Heart right ventricle (tissue), 16 donors: ENCODE measurements at regions of chr17 and their contacts with region 1.

Region 1: GRCh38 chr17:17919169-17920107 is 52.8 kb downstream of the TOM1L2 start:
- DNase-seq: peak; percentile 60 to 82
- ATAC-seq: peak; percentile 50 to 78 (median 67)
- H3K4me3 ChIP-seq: no peak overlapping the region
- H3K27ac ChIP-seq: peak overlapping the region in 5 of 10 donors; percentile 6 to 87 (median 78)
- H3K4me1 ChIP-seq: peaks cover 22 to 62% (median 47%) of the 10 kb centered on the region in 9 donors
- H3K27me3 ChIP-seq: no peaks in the 10 kb centered on the region
- CTCF ChIP-seq: peak; percentile 58 to 85 (median 79)

Region 2: GRCh38 chr17:17823433-17824118 is 95.9 kb before region 1 on chr17:
- intact Hi-C with region 1: no loop called
- DNase-seq: peak; percentile 83 to 88
- ATAC-seq: peak; percentile 86 to 94 (median 90)
- H3K4me3 ChIP-seq: peak overlapping the region; percentile 1 to 67 (median 54)
- H3K27ac ChIP-seq: peak overlapping the region; percentile 57 to 92 (median 83)
- H3K4me1 ChIP-seq: peaks cover 29 to 78% (median 69%) of the 10 kb centered on the region in 9 donors
- H3K27me3 ChIP-seq: no peaks in the 10 kb centered on the region
- CTCF ChIP-seq: no peak

Region 3: GRCh38 chr17:17859909-17860765 is 59.3 kb before region 1 on chr17:
- intact Hi-C with region 1: loop called in 3 of 10 experiments (anchors 10 kb)
- DNase-seq: peak; percentile 69 to 75
- ATAC-seq: peak; percentile 88 to 97 (median 94)
- H3K4me3 ChIP-seq: no peak overlapping the region
- H3K27ac ChIP-seq: peak overlapping the region in 7 of 10 donors; percentile 7 to 64 (median 39)
- H3K4me1 ChIP-seq: peaks cover 9 to 42% (median 15%) of the 10 kb centered on the region in 9 donors
- H3K27me3 ChIP-seq: no peaks in the 10 kb centered on the region
- CTCF ChIP-seq: peak; percentile 89 to 99 (median 97)

Region 4: DNA sequence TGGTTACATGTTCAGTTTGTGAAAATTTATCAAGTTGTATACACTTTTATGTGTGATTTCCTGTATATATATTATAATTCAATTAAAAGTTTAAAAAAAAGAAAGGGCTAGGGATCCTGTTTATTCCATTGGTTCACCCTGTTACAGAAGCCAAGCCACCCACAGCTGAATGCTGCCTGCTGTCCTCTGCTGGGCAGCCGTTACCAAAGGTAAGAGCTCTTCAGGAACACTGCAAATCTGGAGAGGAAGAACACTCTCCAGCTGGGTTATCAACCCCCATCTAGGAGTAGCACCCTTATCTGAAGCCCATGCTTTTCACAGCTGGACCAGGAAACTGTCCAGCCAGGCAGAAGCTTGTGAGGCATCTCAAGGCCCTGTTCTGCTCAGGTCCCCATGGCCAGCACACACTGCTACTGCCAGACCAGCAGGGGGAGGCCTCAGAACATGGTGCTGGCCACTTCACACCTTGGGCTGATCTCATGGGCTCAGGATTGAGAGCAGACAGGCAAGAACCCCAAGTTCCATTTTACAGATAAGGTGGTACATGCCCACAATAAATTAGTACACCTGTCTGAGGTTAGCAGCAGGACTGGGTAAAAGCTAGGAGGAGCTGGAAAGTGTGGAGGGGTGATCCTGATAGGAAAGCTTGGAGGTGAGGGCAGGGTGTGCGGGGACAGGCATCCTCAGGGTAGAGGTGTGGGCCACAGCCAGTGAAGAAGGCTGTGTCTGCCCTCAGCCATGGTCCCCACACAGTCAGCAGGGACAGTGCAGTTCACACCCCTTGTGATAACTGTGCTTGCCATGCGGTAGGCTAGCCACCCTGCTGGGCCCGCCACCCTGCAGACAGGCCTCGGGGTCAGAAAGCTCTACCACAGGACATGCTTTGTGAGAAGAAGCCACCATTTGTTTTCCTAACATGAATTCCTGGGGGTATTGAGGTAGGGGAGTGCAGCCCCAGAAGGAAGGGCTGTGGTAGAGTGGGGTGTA is 28.4 kb before region 1 on chr17:
- intact Hi-C with region 1: loop called in 1 of 10 experiments (anchors 5 kb)
- DNase-seq: peak; percentile 38 to 42
- ATAC-seq: peak; percentile 49 to 76 (median 66)
- H3K4me3 ChIP-seq: no peak overlapping the region
- H3K27ac ChIP-seq: peak overlapping the region in 1 of 10 donors; percentile 12
- H3K4me1 ChIP-seq: peaks cover 4 to 43% (median 27%) of the 10 kb centered on the region in 9 donors
- H3K27me3 ChIP-seq: no peaks in the 10 kb centered on the region
- CTCF ChIP-seq: peak; percentile 36 to 75 (median 66)

Region 5: DNA sequence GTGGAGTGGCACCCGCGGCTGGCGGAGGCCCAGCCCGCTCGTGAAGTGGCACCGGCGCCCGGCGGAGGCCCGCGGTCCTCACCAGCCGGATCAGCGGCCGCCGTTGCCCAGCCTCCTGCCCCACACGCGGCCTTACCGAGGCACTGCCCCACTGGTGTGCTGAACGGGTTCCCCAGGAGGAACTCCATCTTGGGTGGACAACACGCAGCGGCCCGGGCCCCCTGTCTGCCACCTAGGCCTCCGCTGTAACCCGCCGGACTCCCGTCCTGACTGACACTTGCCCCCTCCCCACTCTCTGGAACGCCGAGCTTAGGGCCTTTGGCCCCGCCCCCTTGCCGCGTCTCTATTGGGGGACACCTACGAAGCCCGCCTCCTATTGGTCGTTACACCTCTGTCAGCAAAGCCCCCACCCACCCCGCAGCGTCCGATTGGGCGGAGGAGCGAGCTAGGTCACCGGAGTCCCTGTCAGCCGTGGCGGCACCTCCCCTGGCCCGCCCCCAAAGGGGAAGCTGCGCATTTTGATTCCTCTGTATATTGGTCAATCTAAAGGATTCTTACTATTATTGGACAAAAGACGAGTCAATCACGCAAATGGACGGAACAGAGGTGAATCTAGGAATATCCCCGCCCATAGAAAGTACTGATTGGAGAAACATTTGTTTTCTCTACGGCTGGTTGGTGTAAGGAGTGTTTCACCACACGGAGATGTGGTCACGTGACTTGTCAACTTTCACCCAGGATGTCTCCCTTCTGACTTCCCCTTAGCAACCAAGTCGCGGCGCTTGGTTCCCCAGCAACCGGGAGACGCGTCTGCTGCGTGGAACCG is 52.9 kb after region 1 on chr17 and contains the starts of genes DRC3 and TOM1L2:
- intact Hi-C with region 1: loop called in 4 of 10 experiments (anchors 1 to 5 kb)
- DNase-seq: peak; percentile 100
- ATAC-seq: peak; percentile 96 to 98 (median 98)
- H3K4me3 ChIP-seq: peak within 1 kb of the TSS; percentile 73 to 97 (median 94)
- H3K27ac ChIP-seq: peak within 1 kb of the TSS; percentile 79 to 96 (median 94)
- H3K4me1 ChIP-seq: peaks cover under 1 to 54% (median 29%) of the 10 kb centered on the region in 9 donors
- H3K27me3 ChIP-seq: no peaks in the 10 kb centered on the region
- CTCF ChIP-seq: peak in 7 of 9 donors; percentile 15 to 51 (median 37)
- total RNA-seq, gene DRC3: 1.1 to 2.6 (median 2.0) TPM
- total RNA-seq, gene TOM1L2: 174 to 331 (median 290) TPM

Region 6: DNA sequence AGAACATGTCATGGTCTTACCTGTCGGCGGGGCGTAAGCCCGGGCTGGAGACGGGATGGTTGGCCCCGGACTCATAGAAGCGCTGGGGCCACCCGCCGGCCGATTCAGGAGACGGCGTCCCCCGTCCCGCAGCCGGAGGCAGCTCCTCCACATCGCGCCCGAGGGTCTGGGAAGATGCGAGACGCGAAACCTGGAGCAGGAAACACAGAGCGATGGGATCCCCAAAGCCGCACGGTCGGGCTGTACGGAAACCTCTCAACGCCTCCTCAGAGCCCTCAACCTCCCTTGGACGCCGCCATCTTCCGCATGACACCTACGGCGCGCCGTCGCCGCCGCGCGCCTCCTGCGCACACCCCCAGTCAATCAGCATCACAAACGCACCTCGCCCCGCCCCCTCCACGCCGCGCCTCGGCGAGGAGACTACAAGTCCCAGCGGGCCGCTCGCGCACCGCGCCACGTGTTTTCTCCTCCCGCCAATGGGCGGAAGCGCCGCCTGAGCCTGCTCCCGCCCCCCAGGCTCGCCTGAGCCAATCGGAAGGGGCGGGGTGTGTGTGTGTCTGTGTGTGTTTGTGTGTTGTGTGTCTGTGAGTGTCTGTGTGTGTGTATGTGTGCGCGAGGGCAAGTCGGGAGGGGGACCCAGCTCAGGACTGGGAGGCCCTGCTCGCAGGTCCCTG is 119.6 kb after region 1 on chr17 and contains the starts of genes ATPAF2 and GID4:
- intact Hi-C with region 1: loop called in 2 of 10 experiments (anchors 5 kb)
- DNase-seq: peak; percentile 99 to 100
- ATAC-seq: peak; percentile 96 to 99 (median 98)
- H3K4me3 ChIP-seq: peak within 1 kb of the TSS; percentile 65 to 98 (median 86)
- H3K27ac ChIP-seq: peak within 1 kb of the TSS; percentile 12 to 89 (median 85)
- H3K4me1 ChIP-seq: peaks cover 9 to 60% (median 50%) of the 10 kb centered on the region in 9 donors
- H3K27me3 ChIP-seq: no peaks in the 10 kb centered on the region
- CTCF ChIP-seq: peak in 3 of 9 donors; percentile 10 to 28 (median 22)
- total RNA-seq, gene ATPAF2: 32.6 to 43.5 (median 37.4) TPM
- total RNA-seq, gene GID4: 14.6 to 23.7 (median 17.3) TPM